Natural killer cell (primary cell): ENCODE measurements at regions of chr6 and their contacts with region 1.

Region 1: DNA sequence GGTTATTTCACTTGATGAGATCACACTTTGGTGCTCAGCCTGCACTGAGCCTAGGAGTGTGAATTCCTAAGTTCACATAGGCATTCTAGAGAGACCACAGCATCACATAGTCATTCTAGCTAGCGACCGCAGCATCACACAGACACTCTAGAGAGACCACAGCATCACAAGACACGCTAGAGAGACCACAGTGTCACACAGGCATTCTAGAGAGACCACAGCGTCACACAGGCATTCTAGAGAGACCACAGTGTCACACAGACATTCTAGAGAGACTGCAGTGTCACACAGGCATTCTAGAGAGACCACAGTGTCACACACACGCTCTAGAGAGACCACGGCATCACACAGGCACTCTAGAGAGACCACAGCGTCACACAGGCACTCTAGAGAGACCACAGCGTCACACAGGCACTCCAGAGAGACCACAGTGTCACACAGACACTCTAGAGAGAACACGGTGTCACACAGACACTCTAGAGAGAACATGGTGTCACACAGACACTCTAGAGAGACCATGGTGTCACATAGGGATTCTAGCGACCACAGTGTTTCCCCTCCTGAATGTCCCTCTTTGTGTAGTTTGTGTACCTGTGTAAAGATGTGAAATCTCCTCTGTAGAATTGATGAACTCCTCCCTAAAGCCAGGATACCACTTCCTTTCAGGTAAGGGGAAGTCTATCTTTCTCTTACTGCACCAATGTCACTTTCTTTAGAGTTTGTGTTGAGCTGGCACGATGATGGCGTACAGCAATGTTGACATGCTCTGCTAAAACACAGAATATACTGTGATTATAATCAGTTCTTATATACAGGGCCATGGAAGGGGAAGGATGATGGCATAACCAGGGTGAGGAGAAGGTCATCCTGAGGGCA is 169.4 kb downstream of the ZDHHC14 start:
- DNase-seq: peak; percentile 68 to 70
- ATAC-seq: peak; percentile 70 to 85 (median 80)
- H3K4me3 ChIP-seq: no peak overlapping the region
- H3K4me3 Mint-ChIP-seq: peak overlapping the region; percentile 54
- H3K27ac ChIP-seq: peak overlapping the region; percentile 85
- H3K27ac Mint-ChIP-seq: peak overlapping the region; percentile 95
- H3K4me1 ChIP-seq: peaks cover 33% of the 10 kb centered on the region
- H3K4me1 Mint-ChIP-seq: peaks cover 41 to 52% of the 10 kb centered on the region in 2 donors
- H3K27me3 ChIP-seq: no peaks in the 10 kb centered on the region
- H3K27me3 Mint-ChIP-seq: peaks cover 0 to 3% of the 10 kb centered on the region in 2 donors
- CTCF ChIP-seq: no peak

Region 2: GRCh38 chr6:157235600-157236039 is 314.7 kb before region 1 on chr6:
- intact Hi-C with region 1: loop called (anchors 5 kb)
- DNase-seq: peak; percentile 33 to 79
- ATAC-seq: peak; percentile 64 to 76 (median 74)
- H3K4me3 ChIP-seq: peak overlapping the region; percentile 45
- H3K4me3 Mint-ChIP-seq: peak overlapping the region; percentile 96
- H3K27ac ChIP-seq: no peak overlapping the region
- H3K27ac Mint-ChIP-seq: peak overlapping the region; percentile 43 to 92
- H3K4me1 ChIP-seq: peaks cover 24% of the 10 kb centered on the region
- H3K4me1 Mint-ChIP-seq: peaks cover 19 to 33% of the 10 kb centered on the region in 2 donors
- H3K27me3 ChIP-seq: peaks cover 29% of the 10 kb centered on the region
- H3K27me3 Mint-ChIP-seq: peaks cover 31 to 36% of the 10 kb centered on the region in 2 donors
- CTCF ChIP-seq: peak; percentile 58

Region 3: GRCh38 chr6:157569543-157569942 is 19.2 kb after region 1 on chr6:
- intact Hi-C with region 1: loop called (anchors 2 kb)
- DNase-seq: peak in 1 of 2 donors; percentile 67
- ATAC-seq: peak in 2 of 3 donors; percentile 68 to 87
- H3K4me3 ChIP-seq: no peak overlapping the region
- H3K4me3 Mint-ChIP-seq: peak overlapping the region; percentile 68
- H3K27ac ChIP-seq: no peak overlapping the region
- H3K27ac Mint-ChIP-seq: peak overlapping the region; percentile 51
- H3K4me1 ChIP-seq: peaks cover 10% of the 10 kb centered on the region
- H3K4me1 Mint-ChIP-seq: peaks cover 14 to 20% of the 10 kb centered on the region in 2 donors
- H3K27me3 ChIP-seq: no peaks in the 10 kb centered on the region
- H3K27me3 Mint-ChIP-seq: no peaks in the 10 kb centered on the region
- CTCF ChIP-seq: no peak

Region 4: GRCh38 chr6:157693867-157694266 is 143.5 kb after region 1 on chr6:
- intact Hi-C with region 1: no loop called
- DNase-seq: no peak
- ATAC-seq: no peak
- H3K4me3 ChIP-seq: no peak overlapping the region
- H3K4me3 Mint-ChIP-seq: no peak overlapping the region
- H3K27ac ChIP-seq: no peak overlapping the region
- H3K27ac Mint-ChIP-seq: no peak overlapping the region
- H3K4me1 ChIP-seq: no peaks in the 10 kb centered on the region
- H3K4me1 Mint-ChIP-seq: no peaks in the 10 kb centered on the region
- H3K27me3 ChIP-seq: no peaks in the 10 kb centered on the region
- H3K27me3 Mint-ChIP-seq: peaks cover 20 to 21% of the 10 kb centered on the region in 2 donors
- CTCF ChIP-seq: no peak